OCI-LY7 (cell line): ENCODE measurements at regions of chr19 and their contacts with region 1.

Region 1: DNA sequence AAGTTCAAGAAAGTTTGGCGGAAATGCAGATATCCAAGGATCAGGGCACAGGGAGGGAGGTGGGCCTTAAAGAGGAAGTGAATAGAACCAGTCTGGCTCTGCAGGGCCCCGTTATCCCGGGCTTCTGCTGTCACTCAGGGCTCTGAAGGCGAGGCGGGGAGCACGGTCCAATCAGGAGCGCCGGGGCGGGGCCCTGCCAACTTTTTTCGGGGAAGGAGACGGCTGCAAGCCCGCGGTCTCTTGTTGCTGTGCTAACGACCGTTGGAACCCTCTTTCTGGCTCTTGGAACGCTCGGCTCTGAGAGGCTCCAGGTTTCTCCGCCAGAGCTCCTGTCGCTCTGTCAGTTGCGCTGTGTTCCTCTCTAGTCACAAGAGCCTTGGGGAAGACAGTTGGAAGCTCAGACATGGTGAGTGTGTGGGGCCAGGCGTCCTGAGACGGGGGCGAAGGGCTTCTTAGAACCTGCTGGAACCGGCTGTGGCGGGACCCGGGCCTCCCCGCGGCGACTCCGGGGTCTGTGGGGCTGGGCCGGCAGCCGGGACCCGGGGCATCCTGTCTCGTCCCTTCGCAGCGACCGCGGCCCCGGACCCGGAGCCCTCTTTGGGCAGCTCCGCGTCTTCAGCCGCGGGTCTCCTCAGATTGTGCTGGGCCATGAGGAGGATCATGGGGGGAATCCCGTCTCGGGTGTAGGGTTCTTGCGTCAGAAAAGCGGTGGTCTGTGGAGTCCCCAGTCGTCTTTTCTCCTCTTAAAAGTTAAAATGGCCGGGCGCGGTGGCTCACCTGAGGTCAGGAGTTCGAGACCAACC is 27.7 kb downstream of the ZNF844 start:
- DNase-seq: no peak
- H3K4me3 ChIP-seq: no peak overlapping the region
- H3K27ac ChIP-seq: no peak overlapping the region
- H3K4me1 ChIP-seq: no peaks in the 10 kb centered on the region
- CTCF ChIP-seq: no peak

Region 2: GRCh38 chr19:12255372-12255771 is 163.1 kb after region 1 on chr19:
- CTCF ChIA-PET with region 1: no interaction called
- POLR2A ChIA-PET with region 1: no interaction called
- intact Hi-C with region 1: no loop called
- DNase-seq: no peak
- H3K4me3 ChIP-seq: no peak overlapping the region
- H3K27ac ChIP-seq: no peak overlapping the region
- H3K4me1 ChIP-seq: no peaks in the 10 kb centered on the region
- CTCF ChIP-seq: no peak

Region 3: DNA sequence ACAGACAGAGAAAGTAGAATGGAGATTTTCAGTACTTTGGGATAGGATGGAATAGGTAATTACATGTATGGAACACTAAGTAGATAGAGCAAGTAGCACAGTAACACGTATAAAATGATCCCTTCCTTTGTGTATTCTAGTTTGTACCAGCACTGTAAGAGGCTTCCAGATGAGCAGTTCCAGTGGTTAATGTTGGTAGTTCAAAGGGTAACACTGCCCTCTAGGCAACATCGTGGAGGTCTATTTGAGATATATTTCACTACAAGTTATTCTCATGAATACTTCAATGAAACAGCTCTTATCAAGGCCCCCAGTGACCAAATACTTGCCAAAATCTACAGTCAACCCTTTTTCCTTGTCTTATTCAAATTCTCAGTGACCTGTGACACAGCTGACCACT is 254.6 kb after region 1 on chr19:
- CTCF ChIA-PET with region 1: no interaction called
- POLR2A ChIA-PET with region 1: no interaction called
- intact Hi-C with region 1: loop called (anchors 10 kb)
- DNase-seq: peak; percentile 60
- H3K4me3 ChIP-seq: no peak overlapping the region
- H3K27ac ChIP-seq: no peak overlapping the region
- H3K4me1 ChIP-seq: no peaks in the 10 kb centered on the region
- CTCF ChIP-seq: peak; percentile 71